ENCODE measurements at regions of chr13 and their contacts with region 1.

Region 1: GRCh38 chr13:99176309-99177276 is 24.1 kb upstream of the UBAC2 start:
- DNase-seq: peak; percentile 69 to 83 (median 72)
- H3K4me3 ChIP-seq: peak overlapping the region; percentile 49
- H3K4me3 Mint-ChIP-seq: peak overlapping the region; percentile 12 to 86 (median 77)
- H3K27ac ChIP-seq: no peak overlapping the region
- H3K27ac Mint-ChIP-seq: peak overlapping the region in 7 of 8 donors; percentile 4 to 94 (median 53)
- H3K4me1 ChIP-seq: peaks cover 33% of the 10 kb centered on the region
- H3K4me1 Mint-ChIP-seq: peaks cover 39 to 49% (median 42%) of the 10 kb centered on the region in 3 donors
- H3K27me3 ChIP-seq: no peaks in the 10 kb centered on the region
- H3K27me3 Mint-ChIP-seq: peaks cover 0 to 2% of the 10 kb centered on the region in 2 donors

Region 2: GRCh38 chr13:98598043-98598442 is 578.5 kb before region 1 on chr13:
- CTCF ChIA-PET with region 1: no interaction called
- POLR2A ChIA-PET with region 1: no interaction called
- DNase-seq: no peak
- H3K4me3 ChIP-seq: no peak overlapping the region
- H3K4me3 Mint-ChIP-seq: no peak overlapping the region
- H3K27ac ChIP-seq: no peak overlapping the region
- H3K27ac Mint-ChIP-seq: peak overlapping the region in 1 of 8 donors; percentile 0
- H3K4me1 ChIP-seq: no peaks in the 10 kb centered on the region
- H3K4me1 Mint-ChIP-seq: no peaks in the 10 kb centered on the region
- H3K27me3 ChIP-seq: no peaks in the 10 kb centered on the region
- H3K27me3 Mint-ChIP-seq: peaks cover 2 to 4% of the 10 kb centered on the region in 2 donors

Region 3: DNA sequence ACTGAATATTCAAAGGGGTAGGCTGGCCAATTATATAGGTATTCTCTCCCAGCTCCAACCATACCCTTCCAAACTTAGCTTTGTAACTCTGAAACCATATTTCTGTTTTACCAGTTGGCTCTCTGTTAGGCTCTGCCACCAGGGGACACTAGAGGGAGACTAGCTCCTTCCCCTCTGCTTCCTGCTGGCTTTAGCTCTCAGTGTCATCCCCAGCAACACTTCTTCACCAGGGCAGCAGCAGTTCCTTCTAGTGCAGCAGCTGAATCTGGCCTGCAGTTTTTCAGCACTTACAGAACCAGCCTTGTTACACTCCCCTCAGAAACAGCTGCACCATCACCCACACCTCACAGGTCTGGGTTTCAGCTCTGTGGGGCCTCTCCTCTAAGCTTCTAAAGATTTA is 147.7 kb before region 1 on chr13:
- CTCF ChIA-PET with region 1: interaction called, 13 read pairs
- POLR2A ChIA-PET with region 1: no interaction called
- DNase-seq: peak; percentile 23 to 65 (median 34)
- H3K4me3 ChIP-seq: no peak overlapping the region
- H3K4me3 Mint-ChIP-seq: no peak overlapping the region
- H3K27ac ChIP-seq: no peak overlapping the region
- H3K27ac Mint-ChIP-seq: peak overlapping the region in 6 of 8 donors; percentile 2 to 82 (median 40)
- H3K4me1 ChIP-seq: peaks cover 37% of the 10 kb centered on the region
- H3K4me1 Mint-ChIP-seq: peaks cover 58 to 82% (median 73%) of the 10 kb centered on the region in 3 donors
- H3K27me3 ChIP-seq: no peaks in the 10 kb centered on the region
- H3K27me3 Mint-ChIP-seq: no peaks in the 10 kb centered on the region

Region 4: DNA sequence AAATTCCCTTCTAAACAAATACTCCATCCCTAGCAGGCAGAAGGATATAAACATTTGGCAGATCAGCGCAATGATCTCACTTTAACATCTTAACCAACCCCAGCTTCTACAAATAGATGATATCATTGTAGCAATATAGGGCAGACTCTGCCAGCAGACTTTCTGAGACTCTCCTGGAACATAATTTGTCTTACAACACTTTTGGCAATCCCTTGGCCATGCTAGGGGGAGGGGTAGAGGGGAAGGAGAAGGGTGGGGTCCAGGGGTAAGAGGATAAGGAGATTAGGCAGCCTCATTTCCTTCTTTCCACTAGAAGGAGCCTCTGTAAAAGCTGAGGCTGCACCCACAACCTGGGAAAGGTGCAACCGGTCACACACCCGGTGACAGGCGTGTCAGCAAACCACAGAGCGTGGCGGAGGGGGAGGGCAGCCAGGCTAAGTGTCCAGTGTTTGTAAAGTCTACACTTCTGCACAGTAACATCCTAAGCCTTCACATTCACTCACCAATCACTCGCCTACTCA is 15.3 kb after region 1 on chr13:
- CTCF ChIA-PET with region 1: interaction called, 26 read pairs
- POLR2A ChIA-PET with region 1: no interaction called
- DNase-seq: no peak
- H3K4me3 ChIP-seq: no peak overlapping the region
- H3K4me3 Mint-ChIP-seq: no peak overlapping the region
- H3K27ac ChIP-seq: no peak overlapping the region
- H3K27ac Mint-ChIP-seq: peak overlapping the region in 6 of 8 donors; percentile 38 to 88 (median 62)
- H3K4me1 ChIP-seq: peaks cover 4% of the 10 kb centered on the region
- H3K4me1 Mint-ChIP-seq: peaks cover 14 to 30% (median 27%) of the 10 kb centered on the region in 3 donors
- H3K27me3 ChIP-seq: no peaks in the 10 kb centered on the region
- H3K27me3 Mint-ChIP-seq: peaks cover 0 to 2% of the 10 kb centered on the region in 2 donors

Region 5: GRCh38 chr13:99214232-99214631 is 37.6 kb after region 1 on chr13:
- CTCF ChIA-PET with region 1: interaction called, 24 read pairs
- POLR2A ChIA-PET with region 1: no interaction called
- DNase-seq: peak in 1 of 5 donors; percentile 63
- H3K4me3 ChIP-seq: peak overlapping the region; percentile 34
- H3K4me3 Mint-ChIP-seq: peak overlapping the region; percentile 35 to 98 (median 94)
- H3K27ac ChIP-seq: no peak overlapping the region
- H3K27ac Mint-ChIP-seq: peak overlapping the region; percentile 97 to 100 (median 98)
- H3K4me1 ChIP-seq: peaks cover 81% of the 10 kb centered on the region
- H3K4me1 Mint-ChIP-seq: peaks cover 68 to 90% (median 87%) of the 10 kb centered on the region in 3 donors
- H3K27me3 ChIP-seq: no peaks in the 10 kb centered on the region
- H3K27me3 Mint-ChIP-seq: no peaks in the 10 kb centered on the region

Region 6: GRCh38 chr13:99258210-99258860 is 81.7 kb after region 1 on chr13 and contains the start of gene GPR18:
- CTCF ChIA-PET with region 1: interaction called, 276 read pairs
- POLR2A ChIA-PET with region 1: interaction called, 4 read pairs
- DNase-seq: peak in 4 of 5 donors; percentile 16 to 73 (median 58)
- H3K4me3 ChIP-seq: peak within 1 kb of the TSS; percentile 74
- H3K4me3 Mint-ChIP-seq: peak within 1 kb of the TSS; percentile 91 to 98 (median 96)
- H3K27ac ChIP-seq: peak within 1 kb of the TSS; percentile 39
- H3K27ac Mint-ChIP-seq: peak within 1 kb of the TSS; percentile 89 to 99 (median 96)
- H3K4me1 ChIP-seq: peaks cover 63% of the 10 kb centered on the region
- H3K4me1 Mint-ChIP-seq: peaks cover 65 to 83% (median 78%) of the 10 kb centered on the region in 3 donors
- H3K27me3 ChIP-seq: no peaks in the 10 kb centered on the region
- H3K27me3 Mint-ChIP-seq: no peaks in the 10 kb centered on the region
- total RNA-seq, gene GPR18: 15.2 to 16.2 TPM

Region 7: DNA sequence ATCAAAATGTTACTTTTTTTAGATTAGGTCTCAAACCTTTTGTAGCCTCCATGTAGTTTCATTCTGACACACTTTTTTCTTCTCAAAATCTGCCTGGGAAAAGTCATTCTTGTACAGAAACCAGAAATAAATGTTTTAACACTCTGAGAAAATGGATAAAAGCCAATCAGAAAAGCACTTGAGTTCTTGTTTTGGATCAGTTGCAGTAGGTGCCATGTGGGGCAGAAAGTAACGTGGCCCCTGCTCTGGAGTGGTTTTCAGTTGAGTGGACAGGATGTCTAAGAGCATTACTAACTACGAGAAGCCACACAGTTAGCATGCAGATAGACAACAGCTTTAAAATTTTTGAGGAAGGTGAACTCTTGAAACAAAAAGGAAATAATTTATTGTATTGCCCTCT is 111.5 kb after region 1 on chr13:
- CTCF ChIA-PET with region 1: no interaction called
- POLR2A ChIA-PET with region 1: no interaction called
- DNase-seq: no peak
- H3K4me3 ChIP-seq: no peak overlapping the region
- H3K4me3 Mint-ChIP-seq: peak overlapping the region; percentile 0 to 60 (median 46)
- H3K27ac ChIP-seq: no peak overlapping the region
- H3K27ac Mint-ChIP-seq: peak overlapping the region; percentile 73 to 99 (median 92)
- H3K4me1 ChIP-seq: peaks cover 88% of the 10 kb centered on the region
- H3K4me1 Mint-ChIP-seq: peaks cover 84 to 100% (median 97%) of the 10 kb centered on the region in 3 donors
- H3K27me3 ChIP-seq: no peaks in the 10 kb centered on the region
- H3K27me3 Mint-ChIP-seq: no peaks in the 10 kb centered on the region

Region 8: GRCh38 chr13:99380921-99381645 is 204.5 kb after region 1 on chr13:
- CTCF ChIA-PET with region 1: interaction called, 12 read pairs
- POLR2A ChIA-PET with region 1: no interaction called
- DNase-seq: peak; percentile 27 to 82 (median 62)
- H3K4me3 ChIP-seq: peak overlapping the region; percentile 14
- H3K4me3 Mint-ChIP-seq: peak overlapping the region; percentile 25 to 89 (median 73)
- H3K27ac ChIP-seq: peak overlapping the region; percentile 30
- H3K27ac Mint-ChIP-seq: peak overlapping the region; percentile 95 to 99 (median 98)
- H3K4me1 ChIP-seq: peaks cover 93% of the 10 kb centered on the region
- H3K4me1 Mint-ChIP-seq: peaks cover 84 to 98% (median 98%) of the 10 kb centered on the region in 3 donors
- H3K27me3 ChIP-seq: no peaks in the 10 kb centered on the region
- H3K27me3 Mint-ChIP-seq: no peaks in the 10 kb centered on the region

Measured in CD8-positive, alpha-beta memory T cell (primary cell).